Activated CD4-positive, alpha-beta memory T cell treated with anti-CD3 and anti-CD28 coated beads for 36 hours (primary cell): ENCODE measurements at regions of chr3 and their contacts with region 1.

Region 1: DNA sequence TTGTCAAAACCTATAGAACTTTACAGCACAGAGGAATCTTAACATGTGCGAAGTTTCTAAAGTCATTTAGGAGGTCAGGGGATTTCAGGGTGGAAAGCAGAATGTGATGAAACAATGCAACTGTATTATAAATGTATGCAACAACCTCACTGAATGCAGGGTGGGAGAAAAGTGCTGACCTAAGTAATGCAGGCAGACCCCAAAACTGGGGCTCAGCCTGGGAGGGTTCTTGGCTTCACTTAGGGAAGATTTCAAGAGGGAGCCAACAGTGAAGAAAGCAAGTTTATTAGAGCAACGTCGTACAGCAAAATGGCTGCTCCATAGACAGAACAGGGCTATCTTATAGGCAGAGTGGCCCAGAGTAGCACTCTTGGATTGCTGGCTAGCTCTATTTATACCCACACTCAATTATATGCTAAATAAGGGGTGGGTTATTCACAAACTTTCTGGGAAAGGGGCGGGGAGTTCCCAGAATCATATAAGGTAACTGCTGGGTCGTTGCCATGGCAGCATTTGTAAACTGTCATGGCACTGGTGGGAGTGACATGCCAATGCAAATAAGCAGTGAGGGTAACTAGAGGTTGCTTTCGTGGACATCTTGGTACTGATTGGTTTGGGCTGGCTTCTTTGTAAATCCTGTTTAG is 14.2 kb upstream of the CAND2 start:
- DNase-seq: no peak
- H3K4me3 Mint-ChIP-seq: no peak overlapping the region
- H3K27ac Mint-ChIP-seq: no peak overlapping the region
- H3K4me1 Mint-ChIP-seq: no peaks in the 10 kb centered on the region
- H3K27me3 Mint-ChIP-seq: peaks cover 19% of the 10 kb centered on the region

Region 2: GRCh38 chr3:12658593-12659058 is 123.7 kb before region 1 on chr3:
- CTCF ChIA-PET with region 1: no interaction called
- POLR2A ChIA-PET with region 1: no interaction called
- intact Hi-C with region 1: no loop called
- DNase-seq: no peak
- H3K4me3 Mint-ChIP-seq: peak overlapping the region; percentile 23
- H3K27ac Mint-ChIP-seq: no peak overlapping the region
- H3K4me1 Mint-ChIP-seq: peaks cover 55% of the 10 kb centered on the region
- H3K27me3 Mint-ChIP-seq: no peaks in the 10 kb centered on the region

Region 3: DNA sequence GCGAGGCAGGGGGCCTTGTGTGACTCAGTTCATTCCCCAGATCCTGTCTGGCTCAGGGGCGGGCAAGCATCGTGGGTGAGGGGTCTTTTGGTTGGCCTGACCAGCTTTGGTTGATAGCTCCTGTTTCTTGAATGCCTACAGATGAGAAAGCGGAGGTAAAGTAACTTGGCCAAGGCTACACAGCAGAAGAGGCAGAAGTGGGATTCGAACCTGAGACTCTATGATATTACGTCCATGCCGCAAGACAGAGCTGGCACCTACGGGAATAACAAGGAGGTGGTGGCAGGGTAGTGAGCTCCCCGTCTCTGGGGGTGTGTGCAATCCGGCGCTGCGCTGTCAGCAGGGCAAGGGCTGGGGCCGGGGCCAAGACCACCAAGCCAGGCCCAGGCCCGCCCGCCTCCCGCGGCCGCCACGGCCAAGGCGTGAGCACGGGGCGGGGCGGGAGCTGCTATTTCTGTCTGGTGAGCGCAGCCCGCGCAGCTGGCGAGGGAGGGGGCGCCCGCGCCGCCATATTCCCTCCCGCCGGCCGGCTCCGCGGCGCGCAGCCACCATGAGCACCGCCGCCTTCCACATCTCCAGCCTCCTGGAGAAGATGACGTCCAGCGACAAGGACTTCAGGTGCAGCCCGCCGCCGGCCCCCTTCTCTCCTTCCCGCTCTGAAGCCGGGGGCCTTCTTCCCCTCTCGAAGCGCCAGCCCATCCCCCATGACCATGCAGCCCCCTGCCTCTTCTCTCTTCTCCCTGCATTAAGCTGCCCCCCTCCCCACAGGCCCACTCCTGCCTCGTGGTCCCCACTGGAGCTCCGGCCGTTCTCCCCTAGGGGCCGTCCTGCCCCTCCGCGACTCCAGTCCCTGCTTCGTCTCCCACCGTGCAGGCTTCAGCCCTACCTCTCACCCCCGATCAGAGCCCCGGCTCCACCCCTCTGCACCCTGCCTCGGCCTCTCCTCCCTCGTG is 14.2 kb after region 1 on chr3 and contains the start of gene CAND2:
- CTCF ChIA-PET with region 1: interaction called, 10 read pairs
- POLR2A ChIA-PET with region 1: no interaction called
- intact Hi-C with region 1: no loop called
- DNase-seq: peak; percentile 45
- H3K4me3 Mint-ChIP-seq: peak within 1 kb of the TSS; percentile 72
- H3K27ac Mint-ChIP-seq: no peak within 1 kb of the TSS
- H3K4me1 Mint-ChIP-seq: peaks cover 6% of the 10 kb centered on the region
- H3K27me3 Mint-ChIP-seq: peaks cover 2% of the 10 kb centered on the region
- total RNA-seq, gene CAND2: 1.2 to 1.6 TPM

Region 4: GRCh38 chr3:12810013-12810780 is 27.9 kb after region 1 on chr3:
- CTCF ChIA-PET with region 1: interaction called, 43 read pairs
- POLR2A ChIA-PET with region 1: no interaction called
- intact Hi-C with region 1: loop called (anchors 1 kb)
- DNase-seq: peak; percentile 94
- H3K4me3 Mint-ChIP-seq: peak overlapping the region; percentile 52
- H3K27ac Mint-ChIP-seq: no peak overlapping the region
- H3K4me1 Mint-ChIP-seq: peaks cover 3% of the 10 kb centered on the region
- H3K27me3 Mint-ChIP-seq: no peaks in the 10 kb centered on the region

Region 5: DNA sequence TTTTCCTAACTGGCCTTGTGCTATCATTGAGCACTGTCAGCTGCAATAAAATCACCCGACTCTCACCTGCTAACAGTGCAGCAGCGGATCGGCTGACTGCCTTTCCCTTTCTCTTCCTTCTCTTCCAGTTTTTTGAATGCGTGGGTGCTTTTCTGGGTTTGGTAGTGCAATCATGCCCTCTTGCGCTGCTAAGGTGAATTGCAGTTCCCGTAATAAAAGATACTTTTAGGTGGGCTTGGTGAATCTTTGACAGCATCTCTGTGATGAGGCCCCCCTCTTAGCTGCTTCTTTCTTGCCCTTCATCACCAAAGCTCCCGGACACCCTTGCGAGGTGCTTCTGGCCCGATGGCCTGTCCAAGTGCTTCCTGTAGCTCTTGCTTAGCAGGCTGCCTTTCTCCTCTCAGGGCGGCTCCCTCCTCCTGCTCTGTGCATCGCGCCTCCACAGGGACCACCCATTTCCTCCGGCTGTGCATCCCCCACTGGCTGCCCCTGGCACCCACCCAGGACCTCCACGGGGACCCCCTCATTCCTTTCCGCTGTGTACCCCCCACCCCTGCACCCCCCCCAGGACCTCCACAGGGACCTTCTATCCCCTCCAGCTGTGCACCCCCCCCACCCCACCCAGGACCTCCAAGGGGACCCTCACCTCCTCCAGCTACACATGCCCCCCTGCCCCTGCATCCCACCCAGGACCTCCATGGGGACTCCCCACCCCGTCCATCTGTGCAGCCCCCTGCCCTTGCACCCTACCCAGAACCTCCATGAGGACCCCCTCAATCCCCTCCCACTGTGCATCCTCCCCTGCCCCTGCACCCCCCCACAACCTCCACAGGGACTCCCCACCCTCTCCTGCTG is 109.9 kb after region 1 on chr3:
- CTCF ChIA-PET with region 1: interaction called, 30 read pairs
- POLR2A ChIA-PET with region 1: interaction called, 4 read pairs
- intact Hi-C with region 1: no loop called
- DNase-seq: peak; percentile 63
- H3K4me3 Mint-ChIP-seq: no peak overlapping the region
- H3K27ac Mint-ChIP-seq: no peak overlapping the region
- H3K4me1 Mint-ChIP-seq: peaks cover 12% of the 10 kb centered on the region
- H3K27me3 Mint-ChIP-seq: peaks cover 10% of the 10 kb centered on the region